ENCODE measurements at regions of chr9 and their contacts with region 1.

Region 1: GRCh38 chr9:20558566-20559016 is 63.7 kb downstream of the MLLT3 start:
- DNase-seq: no peak

Region 2: DNA sequence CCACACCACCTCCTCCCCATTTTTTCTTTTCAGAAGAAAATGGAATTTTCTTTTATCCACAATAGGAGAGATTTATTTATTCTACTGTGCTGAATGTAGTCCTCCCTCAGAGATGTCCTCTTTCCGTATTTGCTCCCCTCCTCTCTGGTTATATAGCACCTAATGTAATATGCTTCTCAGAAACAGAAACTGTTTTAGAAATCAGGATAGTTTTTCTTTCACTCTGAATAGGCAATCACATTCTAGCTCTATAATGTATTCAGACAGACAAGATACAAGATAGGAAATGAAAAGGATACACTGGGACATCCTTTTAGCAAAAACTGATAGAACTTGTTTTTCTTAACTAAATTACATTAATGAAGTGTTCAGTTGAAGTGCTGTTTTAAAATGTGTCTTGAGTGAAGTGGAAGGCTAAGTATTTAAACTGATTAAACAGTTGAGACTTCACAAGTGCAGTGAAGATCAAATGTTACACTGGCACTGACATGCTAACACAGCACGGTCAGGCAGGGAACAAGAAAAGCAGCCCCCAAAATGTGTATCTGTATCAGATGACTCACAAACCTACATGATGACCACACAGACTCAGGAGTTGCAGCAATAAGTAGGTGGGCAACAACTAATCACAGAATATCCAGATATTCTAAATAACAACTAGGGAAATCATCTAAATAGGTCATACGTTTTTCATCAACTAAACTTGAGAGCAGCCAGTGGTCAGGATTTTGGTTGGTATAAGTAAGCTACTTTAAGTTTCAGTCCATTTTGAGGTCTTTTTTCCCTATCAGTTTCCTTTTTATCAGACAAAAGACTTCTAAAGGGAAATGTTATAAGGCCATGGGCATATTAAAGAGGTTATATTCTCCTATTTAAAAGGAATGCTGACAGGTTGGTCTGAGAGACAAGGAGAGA is 196.7 kb before region 1 on chr9:
- intact Hi-C with region 1: loop called (anchors 10 kb)
- DNase-seq: no peak

Region 3: GRCh38 chr9:20437476-20437875 is 121.1 kb before region 1 on chr9:
- intact Hi-C with region 1: loop called (anchors 10 kb)
- DNase-seq: no peak

Region 4: DNA sequence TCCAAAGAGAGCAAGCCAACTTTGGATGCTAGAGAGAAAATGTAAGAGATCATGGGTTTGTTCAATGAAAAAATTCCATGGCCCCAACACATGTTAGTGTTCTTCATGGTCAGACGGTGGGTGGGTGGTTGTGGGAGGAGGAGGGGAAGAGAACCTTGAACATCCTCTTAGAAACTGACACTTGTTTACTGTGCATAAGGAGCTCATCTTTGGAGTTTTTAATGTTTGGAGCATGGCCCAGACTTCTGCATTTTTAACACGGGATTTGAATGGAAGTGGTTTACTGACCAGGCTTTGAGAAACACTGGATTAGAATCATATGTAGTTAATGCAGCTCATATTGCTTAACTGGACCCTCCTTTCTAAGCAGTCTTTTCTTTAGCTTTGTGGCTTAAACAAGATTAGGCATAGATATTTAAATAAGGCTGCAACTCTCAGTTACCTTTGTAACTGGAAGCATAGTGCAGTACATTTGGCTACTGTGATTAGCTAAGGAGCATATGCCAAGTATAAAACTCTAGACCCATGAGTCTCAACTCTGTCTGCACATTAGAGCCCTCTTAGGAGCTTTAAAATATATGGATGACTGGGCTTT is 185.5 kb after region 1 on chr9:
- intact Hi-C with region 1: no loop called
- DNase-seq: no peak

Measured in cardiac septum (tissue), 1 donor.